Transverse colon (tissue), 4 donors: ENCODE measurements at regions of chr17 and their contacts with region 1.

Region 1: DNA sequence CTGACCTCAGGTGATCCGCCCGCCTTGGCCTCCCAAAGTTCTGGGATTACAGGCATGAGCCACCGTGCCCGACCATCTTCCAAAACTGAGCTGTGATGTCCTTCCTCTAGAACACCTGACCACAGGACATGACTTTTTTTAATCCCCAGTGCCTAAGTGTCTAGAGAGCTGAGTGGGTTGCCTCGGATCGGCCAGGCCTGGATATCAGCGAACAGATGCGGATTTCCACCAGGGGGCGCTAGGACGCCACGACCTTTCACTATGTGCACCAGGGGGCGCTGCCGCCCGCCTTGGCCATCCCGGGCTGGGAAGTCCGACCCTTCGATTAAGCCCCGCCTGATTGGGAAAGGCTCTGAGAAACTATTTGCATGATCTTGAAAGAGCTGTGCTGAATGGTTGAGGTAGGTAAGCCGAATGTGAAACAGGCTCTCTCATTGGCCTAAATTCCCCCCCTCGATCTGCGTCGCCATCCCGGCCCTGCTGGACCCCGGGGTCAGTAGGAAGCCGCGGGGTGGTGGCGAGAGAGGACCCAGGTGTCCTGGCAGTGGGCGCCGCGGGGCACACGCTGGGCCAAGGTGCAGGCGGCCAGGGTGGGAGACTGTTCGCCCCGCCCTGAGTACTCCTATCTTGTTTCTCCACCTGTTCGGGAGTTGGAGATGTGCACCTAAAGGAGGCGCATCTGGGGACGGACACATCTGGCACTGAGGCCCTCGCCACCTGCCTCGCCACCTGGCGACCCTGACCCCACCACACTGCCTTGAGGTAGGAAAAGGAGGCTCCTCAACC is at the start of gene ACBD4:
- DNase-seq: peak; percentile 96
- H3K4me3 ChIP-seq: peak within 1 kb of the TSS; percentile 61 to 73 (median 68)
- H3K27ac ChIP-seq: peak within 1 kb of the TSS; percentile 80 to 92 (median 90)
- H3K4me1 ChIP-seq: peaks cover 17 to 50% (median 39%) of the 10 kb centered on the region in 4 donors
- H3K27me3 ChIP-seq: no peaks in the 10 kb centered on the region
- CTCF ChIP-seq: peak; percentile 100
- EP300 ChIP-seq: no peak
- POLR2A ChIP-seq: peak; percentile 80
- total RNA-seq, gene ACBD4: 24.9 to 96.1 (median 38.6) TPM

Region 2: GRCh38 chr17:44997733-44998520 is 137.5 kb before region 1 on chr17:
- in situ Hi-C with region 1: no loop called
- intact Hi-C with region 1: no loop called
- DNase-seq: no peak
- H3K4me3 ChIP-seq: no peak overlapping the region
- H3K27ac ChIP-seq: no peak overlapping the region
- H3K4me1 ChIP-seq: no peaks in the 10 kb centered on the region
- H3K27me3 ChIP-seq: no peaks in the 10 kb centered on the region
- CTCF ChIP-seq: no peak
- EP300 ChIP-seq: no peak
- POLR2A ChIP-seq: no peak

Region 3: DNA sequence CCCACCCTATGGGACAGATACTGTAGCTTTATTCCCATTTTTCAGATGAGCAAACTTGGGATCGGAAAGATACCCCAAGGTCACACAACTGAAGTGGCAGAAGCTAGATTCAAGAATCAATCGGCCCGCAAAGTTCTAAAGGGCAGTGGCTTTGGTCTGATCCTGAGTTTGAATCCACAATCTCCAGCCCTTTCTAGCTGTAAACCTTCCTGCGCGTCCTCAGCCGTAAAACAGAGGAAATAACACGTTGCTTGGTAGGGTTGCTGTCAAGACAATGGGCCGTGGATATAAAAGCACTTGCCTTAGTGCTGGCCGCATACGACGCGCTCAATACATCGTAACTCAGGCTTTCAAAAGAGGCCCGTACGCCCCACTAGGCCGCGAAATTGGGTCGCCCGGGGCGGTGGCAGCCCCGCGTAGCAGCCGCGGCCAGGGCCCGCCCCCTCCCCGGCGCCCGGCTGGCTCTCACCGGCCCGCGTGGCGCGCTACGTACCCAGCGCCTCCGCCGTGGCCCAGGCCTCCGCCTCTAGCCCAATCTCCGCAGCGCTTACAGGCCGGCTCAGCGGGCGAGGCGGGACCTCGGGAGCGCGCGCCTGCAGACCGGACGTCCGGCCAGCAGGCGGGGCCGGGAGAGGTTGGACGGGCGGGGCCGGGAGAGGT is 84.2 kb before region 1 on chr17 and contains the start of gene DCAKD:
- in situ Hi-C with region 1: no loop called
- intact Hi-C with region 1: no loop called
- DNase-seq: peak; percentile 95
- H3K4me3 ChIP-seq: peak within 1 kb of the TSS; percentile 44 to 59 (median 52)
- H3K27ac ChIP-seq: peak within 1 kb of the TSS; percentile 95 to 97 (median 96)
- H3K4me1 ChIP-seq: peaks cover 7 to 30% (median 15%) of the 10 kb centered on the region in 4 donors
- H3K27me3 ChIP-seq: no peaks in the 10 kb centered on the region
- CTCF ChIP-seq: peak in 1 of 5 experiments; percentile 13
- EP300 ChIP-seq: no peak
- POLR2A ChIP-seq: peak; percentile 69
- total RNA-seq, gene DCAKD: 9.4 to 144 (median 27.4) TPM

Region 4: GRCh38 chr17:45098869-45099616 is 36.3 kb before region 1 on chr17:
- in situ Hi-C with region 1: no loop called
- intact Hi-C with region 1: loop called (anchors 5 kb)
- DNase-seq: peak; percentile 93
- H3K4me3 ChIP-seq: no peak overlapping the region
- H3K27ac ChIP-seq: peak overlapping the region; percentile 10 to 81 (median 44)
- H3K4me1 ChIP-seq: peaks cover 7 to 11% (median 9%) of the 10 kb centered on the region in 4 donors
- H3K27me3 ChIP-seq: no peaks in the 10 kb centered on the region
- CTCF ChIP-seq: peak; percentile 85 to 93 (median 90)
- EP300 ChIP-seq: no peak
- POLR2A ChIP-seq: no peak

Region 5: GRCh38 chr17:45197555-45198334 is 62.4 kb after region 1 on chr17:
- in situ Hi-C with region 1: loop called in 3 of 4 experiments (anchors 5 to 10 kb)
- intact Hi-C with region 1: loop called (anchors 1 kb)
- DNase-seq: peak; percentile 95
- H3K4me3 ChIP-seq: no peak overlapping the region
- H3K27ac ChIP-seq: peak overlapping the region; percentile 50 to 70 (median 62)
- H3K4me1 ChIP-seq: peaks cover 3 to 13% (median 8%) of the 10 kb centered on the region in 4 donors
- H3K27me3 ChIP-seq: no peaks in the 10 kb centered on the region
- CTCF ChIP-seq: peak; percentile 97 to 100 (median 99)
- EP300 ChIP-seq: no peak
- POLR2A ChIP-seq: no peak